HAP-1 (cell line): ENCODE measurements at regions of chr16 and their contacts with region 1.

Region 1: DNA sequence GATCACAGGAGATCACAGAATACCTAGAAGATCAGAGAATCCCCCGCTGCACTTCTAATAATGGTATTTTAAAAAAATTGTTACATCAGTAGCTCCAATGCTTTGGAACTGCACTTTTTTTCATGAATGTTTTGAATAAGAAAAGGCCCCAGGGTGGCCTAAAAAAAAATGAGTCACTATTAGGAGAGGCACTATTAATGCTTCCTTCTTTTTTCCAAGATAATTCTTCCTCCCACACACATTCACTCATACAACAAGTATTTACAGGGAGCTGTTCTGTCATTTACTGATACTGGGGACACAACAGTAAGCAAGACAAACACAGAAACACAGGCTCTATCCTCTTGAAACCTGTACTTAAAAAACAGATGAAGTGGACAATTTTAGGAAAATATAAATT is 675 bp upstream of the PDZD9 start:
- DNase-seq: no peak
- H3K4me3 ChIP-seq: no peak overlapping the region
- H3K4me1 ChIP-seq: peaks cover 8% of the 10 kb centered on the region; the same call in 1 of the 2 replicates
- H3K27me3 ChIP-seq: no peaks in the 10 kb centered on the region

Region 2: DNA sequence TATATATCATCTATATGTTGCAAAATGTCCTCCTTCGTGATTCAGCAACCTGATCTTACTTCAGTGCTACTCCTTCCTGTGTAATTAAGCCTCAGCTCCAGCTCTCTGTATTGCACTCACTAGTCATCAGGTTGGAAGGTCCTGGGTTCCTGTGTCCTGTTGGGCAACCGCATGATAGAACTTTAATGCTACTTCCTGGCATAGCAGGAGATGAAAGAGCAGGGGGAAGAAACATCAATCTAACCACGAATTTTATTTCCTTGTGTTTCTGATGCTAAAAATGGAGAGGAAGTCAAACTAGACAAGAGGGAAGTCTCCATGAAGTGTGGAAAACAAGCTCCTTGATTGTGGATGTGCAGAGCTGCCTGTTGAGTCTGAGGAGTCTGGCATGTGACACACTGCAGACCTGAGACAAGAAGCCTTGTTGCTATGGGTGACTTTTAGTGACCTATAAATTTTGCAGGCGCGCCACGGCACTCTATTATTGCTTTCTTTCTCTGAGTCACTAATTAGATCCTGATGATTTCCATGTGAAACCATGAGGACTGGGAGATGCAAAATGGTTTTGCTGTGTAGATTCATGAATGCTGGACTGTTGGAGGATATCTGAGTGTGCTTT is 374.8 kb before region 1 on chr16:
- in situ Hi-C with region 1: no loop called
- DNase-seq: no peak
- H3K4me3 ChIP-seq: no peak overlapping the region
- H3K4me1 ChIP-seq: peaks cover 9% of the 10 kb centered on the region; the same call in 1 of the 2 replicates
- H3K27me3 ChIP-seq: no peaks in the 10 kb centered on the region

Region 3: DNA sequence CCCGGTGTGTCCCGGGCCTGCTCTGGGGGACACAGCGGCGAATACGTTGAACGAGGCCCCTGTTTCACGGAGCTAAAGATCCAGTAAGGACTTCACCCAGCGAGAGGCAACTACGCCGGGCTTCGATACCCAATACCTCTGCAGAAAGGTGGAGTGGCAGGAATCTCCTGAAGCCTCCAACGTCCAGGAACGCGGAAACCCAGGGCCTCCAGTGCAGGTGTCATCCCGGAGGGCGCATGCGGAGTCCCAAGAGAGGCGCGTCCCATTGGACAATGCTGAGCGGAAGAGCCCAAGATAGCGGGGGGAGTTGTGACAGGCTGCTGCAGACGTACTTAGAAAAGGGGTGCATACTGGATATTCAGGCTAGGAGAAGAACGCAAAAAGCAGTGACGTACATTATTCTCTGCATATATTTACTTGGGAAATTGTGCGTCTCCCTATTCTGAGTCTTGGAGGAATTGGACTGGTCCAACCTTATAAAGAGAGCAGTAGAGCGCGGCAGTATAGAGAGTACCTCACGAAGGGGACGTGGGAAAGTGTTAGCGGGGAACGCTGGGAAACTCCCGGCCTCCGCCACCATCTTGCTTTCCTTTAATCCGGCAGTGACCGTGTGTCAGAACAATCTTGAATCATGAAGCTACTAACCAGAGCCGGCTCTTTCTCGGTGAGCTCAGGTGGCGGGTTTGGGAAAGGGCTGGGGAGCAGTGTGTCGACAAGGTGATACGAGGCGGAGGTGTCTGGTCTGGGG is 48.6 kb before region 1 on chr16 and contains the start of gene UQCRC2:
- in situ Hi-C with region 1: no loop called
- DNase-seq: peak; percentile 92 to 95
- H3K4me3 ChIP-seq: peak within 1 kb of the TSS; percentile 87
- H3K4me1 ChIP-seq: peaks cover 10% of the 10 kb centered on the region; the same call in 1 of the 2 replicates
- H3K27me3 ChIP-seq: no peaks in the 10 kb centered on the region

Region 4: GRCh38 chr16:22091758-22092600 is 90.4 kb after region 1 on chr16 and contains the start of gene VWA3A:
- in situ Hi-C with region 1: loop called (anchors 5 kb)
- DNase-seq: no peak
- H3K4me3 ChIP-seq: no peak within 1 kb of the TSS
- H3K4me1 ChIP-seq: no peaks in the 10 kb centered on the region
- H3K27me3 ChIP-seq: no peaks in the 10 kb centered on the region

Region 5: GRCh38 chr16:22183901-22184614 is 182.5 kb after region 1 on chr16:
- in situ Hi-C with region 1: loop called (anchors 5 kb)
- DNase-seq: peak in 1 of 2 experiments; percentile 57
- H3K4me3 ChIP-seq: no peak overlapping the region
- H3K4me1 ChIP-seq: no peaks in the 10 kb centered on the region
- H3K27me3 ChIP-seq: peaks cover 7% of the 10 kb centered on the region; the same call in 1 of the 2 replicates